ENCODE measurements at regions of chr6 and their contacts with region 1.

Region 1: GRCh38 chr6:126897758-126898157 is 220.7 kb upstream of the RSPO3 start:
- DNase-seq: no peak
- H3K4me3 ChIP-seq: no peak overlapping the region
- CTCF ChIP-seq: no peak
- POLR2A ChIP-seq: no peak

Region 2: GRCh38 chr6:124984668-124985338 is 1913.0 kb before region 1 on chr6:
- intact Hi-C with region 1: loop called (anchors 5 kb)
- DNase-seq: no peak
- H3K4me3 ChIP-seq: no peak overlapping the region
- CTCF ChIP-seq: no peak
- POLR2A ChIP-seq: no peak

Region 3: DNA sequence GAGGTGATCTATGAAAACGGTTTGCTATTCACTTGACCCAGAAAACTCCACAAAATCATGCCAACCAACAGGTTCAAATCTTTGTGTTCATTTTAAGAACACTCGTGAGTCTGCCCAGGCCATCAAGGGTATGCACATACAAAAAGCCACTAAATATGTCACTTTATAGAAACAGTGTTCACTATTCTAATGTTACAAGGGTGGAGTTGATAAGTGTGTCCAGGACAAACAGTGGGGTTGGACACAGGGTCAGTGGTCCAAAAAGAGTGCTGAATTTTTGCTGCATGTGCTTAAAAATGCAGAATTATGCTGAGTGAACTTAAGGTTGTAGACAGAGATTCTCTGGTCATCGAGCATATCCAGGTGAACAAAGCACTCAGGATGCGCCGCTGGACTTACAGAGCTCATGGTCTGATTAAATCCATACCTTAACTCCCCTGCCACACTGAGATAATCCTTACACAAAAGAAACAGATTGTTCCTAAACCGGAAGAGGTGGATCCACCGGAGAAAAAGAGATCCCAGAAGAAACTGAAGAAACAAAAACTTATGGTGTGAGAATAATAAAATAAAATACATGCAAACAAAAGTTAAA is 538.0 kb after region 1 on chr6:
- intact Hi-C with region 1: no loop called
- DNase-seq: no peak
- H3K4me3 ChIP-seq: no peak overlapping the region
- CTCF ChIP-seq: no peak
- POLR2A ChIP-seq: no peak

Region 4: GRCh38 chr6:128098000-128098581 is 1200.3 kb after region 1 on chr6:
- intact Hi-C with region 1: no loop called
- DNase-seq: no peak
- H3K4me3 ChIP-seq: no peak overlapping the region
- CTCF ChIP-seq: no peak
- POLR2A ChIP-seq: no peak